PC-9 (cell line): ENCODE measurements at regions of chr18 and their contacts with region 1.

Region 1: DNA sequence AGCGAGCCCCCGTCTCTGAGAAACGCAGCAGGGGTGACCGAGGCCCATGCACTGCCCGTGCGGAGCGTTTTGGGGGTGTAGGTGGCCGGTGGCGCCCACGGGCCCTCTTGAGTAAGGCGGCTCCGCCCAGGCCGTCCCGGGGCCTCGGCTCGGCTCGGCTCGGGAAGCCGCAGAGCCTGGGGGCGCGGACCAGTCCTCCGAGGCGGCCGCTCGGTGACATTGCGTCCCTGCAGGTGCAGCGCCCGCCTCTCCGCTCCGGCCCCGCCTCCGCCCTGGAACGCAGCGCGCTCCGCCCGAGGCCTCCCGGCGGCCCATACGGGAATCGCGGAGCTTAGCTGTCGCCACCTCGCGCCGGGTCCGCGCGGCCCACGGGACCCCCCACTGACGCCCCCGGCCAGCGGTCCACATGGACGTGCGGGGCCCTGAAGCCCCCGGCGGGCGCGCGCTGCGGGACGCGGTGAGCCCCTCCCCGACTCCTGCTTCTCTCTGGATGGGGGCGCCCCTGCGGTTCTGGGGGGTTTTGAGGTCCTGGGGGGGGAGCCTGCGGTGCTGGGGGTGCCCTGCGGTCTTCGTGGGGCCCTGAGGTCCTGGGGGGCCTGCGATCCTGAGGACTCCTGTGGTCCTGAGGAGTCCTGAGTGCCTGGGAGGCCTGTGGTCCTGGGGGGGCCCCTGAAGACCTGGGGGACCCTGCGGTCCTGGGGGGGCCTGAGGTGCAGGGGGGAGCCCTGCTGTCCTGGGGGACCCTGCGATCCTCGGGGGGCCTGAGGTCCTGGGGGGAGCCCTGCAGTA is at the start of gene HSBP1L1:
- DNase-seq: peak; percentile 67 to 78
- H3K4me3 ChIP-seq: peak within 1 kb of the TSS; percentile 72
- H3K27ac ChIP-seq: peak within 1 kb of the TSS; percentile 84
- H3K4me1 ChIP-seq: peaks cover 45% of the 10 kb centered on the region
- H3K27me3 ChIP-seq: no peaks in the 10 kb centered on the region
- CTCF ChIP-seq: no peak; the same call in 1 of the 2 replicates
- total RNA-seq, gene HSBP1L1: 32.6 and 41.5 TPM in 2 replicates

Region 2: GRCh38 chr18:79680123-79680879 is 284.2 kb before region 1 on chr18:
- CTCF ChIA-PET with region 1: no interaction called
- POLR2A ChIA-PET with region 1: no interaction called
- intact Hi-C with region 1: loop called (anchors 2 kb)
- DNase-seq: peak; percentile 14 to 63
- H3K4me3 ChIP-seq: peak overlapping the region; percentile 63
- H3K27ac ChIP-seq: no peak overlapping the region
- H3K4me1 ChIP-seq: peaks cover 22% of the 10 kb centered on the region
- H3K27me3 ChIP-seq: no peaks in the 10 kb centered on the region
- CTCF ChIP-seq: no peak

Region 3: GRCh38 chr18:79790996-79791972 is 173.2 kb before region 1 on chr18:
- CTCF ChIA-PET with region 1: no interaction called
- POLR2A ChIA-PET with region 1: no interaction called
- intact Hi-C with region 1: loop called (anchors 5 kb)
- DNase-seq: peak; percentile 63 to 94
- H3K4me3 ChIP-seq: peak overlapping the region; percentile 8; the same call in 1 of the 2 replicates
- H3K27ac ChIP-seq: no peak overlapping the region; the same call in 1 of the 2 replicates
- H3K4me1 ChIP-seq: peaks cover 17% of the 10 kb centered on the region
- H3K27me3 ChIP-seq: no peaks in the 10 kb centered on the region
- CTCF ChIP-seq: no peak

Region 4: GRCh38 chr18:79884963-79885751 is 79.4 kb before region 1 on chr18:
- CTCF ChIA-PET with region 1: no interaction called
- POLR2A ChIA-PET with region 1: no interaction called
- intact Hi-C with region 1: no loop called
- DNase-seq: no peak
- H3K4me3 ChIP-seq: no peak overlapping the region
- H3K27ac ChIP-seq: no peak overlapping the region
- H3K4me1 ChIP-seq: no peaks in the 10 kb centered on the region
- H3K27me3 ChIP-seq: peaks cover 36% of the 10 kb centered on the region
- CTCF ChIP-seq: no peak

Region 5: GRCh38 chr18:79951578-79952455 is 12.7 kb before region 1 on chr18 and contains the start of gene SLC66A2:
- CTCF ChIA-PET with region 1: no interaction called
- POLR2A ChIA-PET with region 1: interaction called, 25 read pairs
- intact Hi-C with region 1: no loop called
- DNase-seq: peak; percentile 52 to 82
- H3K4me3 ChIP-seq: peak within 1 kb of the TSS; percentile 69
- H3K27ac ChIP-seq: no peak within 1 kb of the TSS
- H3K4me1 ChIP-seq: peaks cover 11% of the 10 kb centered on the region; the same call in 1 of the 2 replicates
- H3K27me3 ChIP-seq: no peaks in the 10 kb centered on the region
- CTCF ChIP-seq: no peak
- total RNA-seq, gene SLC66A2: 24.3 and 28.0 TPM in 2 replicates

Region 6: DNA sequence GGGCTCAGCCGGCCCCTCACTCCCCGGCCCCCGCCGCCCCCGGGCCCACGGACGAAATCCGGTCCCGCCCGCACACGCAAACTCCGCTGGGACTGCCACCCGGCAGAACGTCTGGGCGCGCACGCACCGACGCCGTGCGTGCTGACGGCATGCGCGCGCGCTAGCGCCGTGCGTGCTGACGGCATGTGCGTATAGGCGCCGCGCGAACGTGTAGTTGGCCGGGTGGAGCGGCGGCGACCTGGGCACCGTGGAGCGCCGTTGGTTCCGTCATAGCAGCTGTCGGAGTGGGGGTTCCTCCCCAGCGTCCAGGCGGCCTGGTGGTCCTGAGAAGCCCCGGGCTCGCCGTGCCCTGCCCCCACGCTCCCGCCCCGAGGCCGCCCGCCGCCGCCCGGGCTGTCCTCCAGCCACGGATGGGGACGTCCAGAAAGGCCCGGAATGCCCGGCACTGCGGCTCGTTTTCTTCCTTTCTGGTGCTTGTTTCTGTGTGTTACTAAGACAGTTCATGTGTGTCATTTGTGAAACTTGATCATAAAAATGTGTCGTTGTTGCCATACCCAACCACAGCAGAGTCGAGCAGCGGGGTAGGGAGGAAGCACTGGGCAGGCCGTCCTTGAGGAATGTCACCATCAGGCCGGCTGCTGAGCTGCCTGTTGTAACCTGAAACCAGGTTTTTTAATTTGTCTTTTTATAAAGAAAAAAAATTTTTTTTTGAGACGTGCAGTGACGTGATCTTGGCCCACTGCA is 24.1 kb after region 1 on chr18 and contains the start of gene TXNL4A:
- CTCF ChIA-PET with region 1: no interaction called
- POLR2A ChIA-PET with region 1: interaction called, 14 read pairs
- intact Hi-C with region 1: no loop called
- DNase-seq: peak; percentile 67 to 70
- H3K4me3 ChIP-seq: peak within 1 kb of the TSS; percentile 88
- H3K27ac ChIP-seq: peak within 1 kb of the TSS; percentile 82
- H3K4me1 ChIP-seq: peaks cover 23% of the 10 kb centered on the region
- H3K27me3 ChIP-seq: no peaks in the 10 kb centered on the region
- CTCF ChIP-seq: no peak
- total RNA-seq, gene TXNL4A: 106 and 120 TPM in 2 replicates